ENCODE measurements at regions of chr22 and their contacts with region 1.

Region 1: DNA sequence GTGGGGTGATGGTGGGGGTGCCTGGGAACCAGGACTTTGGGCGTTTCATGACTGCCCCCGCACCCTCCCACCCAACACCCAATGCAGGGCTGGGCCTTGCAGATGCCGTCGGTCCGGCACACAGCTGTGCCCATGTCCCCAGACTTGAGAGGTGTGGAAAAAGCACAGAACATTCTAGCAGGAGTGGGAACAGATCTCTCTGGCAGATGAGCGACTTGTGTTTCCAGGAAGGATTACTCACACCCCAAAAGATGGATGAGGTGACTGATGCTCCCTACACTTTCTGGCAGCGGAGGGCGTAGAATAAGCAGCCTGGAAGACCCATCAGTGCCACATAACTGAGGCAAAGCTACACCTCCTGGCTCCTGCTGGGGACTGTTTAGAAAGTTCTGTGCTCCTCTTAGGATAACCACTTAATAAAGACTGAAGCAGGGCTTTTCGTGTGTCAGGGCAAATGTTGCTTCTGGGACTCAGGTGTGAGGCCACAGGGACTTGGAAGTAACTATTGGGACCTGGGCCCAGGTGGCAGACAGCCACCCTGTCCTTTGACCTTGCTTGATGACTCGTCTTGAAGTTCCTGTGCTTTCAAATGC is 24.2 kb downstream of the FBLN1 start:
- DNase-seq: no peak
- H3K4me3 ChIP-seq: no peak overlapping the region
- H3K27ac ChIP-seq: no peak overlapping the region
- H3K4me1 ChIP-seq: peaks cover under 1% of the 10 kb centered on the region; the same call in 1 of the 2 replicates
- H3K27me3 ChIP-seq: no peaks in the 10 kb centered on the region
- CTCF ChIP-seq: no peak

Region 2: DNA sequence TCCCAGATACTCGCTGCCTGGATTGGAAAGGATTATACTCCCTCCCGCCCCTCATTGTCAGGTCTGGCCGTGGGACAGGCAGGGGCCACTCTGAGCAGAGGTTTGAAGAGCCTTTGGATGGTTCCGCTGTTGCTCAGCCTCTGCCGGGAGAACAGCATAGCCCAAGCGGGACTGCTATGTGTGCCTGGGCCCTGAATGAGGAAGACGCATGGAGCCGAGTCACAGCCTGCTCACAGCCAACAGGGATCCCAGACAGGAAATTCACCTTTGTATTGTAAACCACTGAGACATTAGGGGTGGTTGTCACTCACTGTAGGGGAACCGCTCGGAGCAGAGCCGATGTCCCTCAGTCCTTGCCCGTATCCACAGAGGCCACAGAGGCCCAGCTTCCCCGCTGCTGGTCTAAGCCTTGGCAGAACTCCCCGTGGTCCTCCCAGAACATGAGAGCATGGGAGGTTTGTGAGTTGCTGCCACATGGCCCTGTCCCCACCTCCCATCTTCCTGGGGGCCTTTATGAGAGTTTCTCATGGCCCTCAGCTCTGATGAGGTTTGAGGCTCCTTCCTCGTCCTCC is 227.8 kb before region 1 on chr22:
- CTCF ChIA-PET with region 1: interaction called, 12 read pairs
- POLR2A ChIA-PET with region 1: no interaction called
- intact Hi-C with region 1: no loop called
- DNase-seq: no peak
- H3K4me3 ChIP-seq: no peak overlapping the region
- H3K27ac ChIP-seq: no peak overlapping the region
- H3K4me1 ChIP-seq: peaks cover 14% of the 10 kb centered on the region; the same call in 1 of the 2 replicates
- H3K27me3 ChIP-seq: no peaks in the 10 kb centered on the region
- CTCF ChIP-seq: no peak

Region 3: GRCh38 chr22:45548991-45549745 is 22.3 kb after region 1 on chr22:
- CTCF ChIA-PET with region 1: no interaction called
- POLR2A ChIA-PET with region 1: no interaction called
- intact Hi-C with region 1: no loop called
- DNase-seq: peak; percentile 87 to 91
- H3K4me3 ChIP-seq: no peak overlapping the region; the same call in 1 of the 2 replicates
- H3K27ac ChIP-seq: peak overlapping the region; percentile 83
- H3K4me1 ChIP-seq: peaks cover 38% of the 10 kb centered on the region
- H3K27me3 ChIP-seq: no peaks in the 10 kb centered on the region
- CTCF ChIP-seq: peak; percentile 74

Measured in PC-9 (cell line).